Activated CD4-positive, alpha-beta memory T cell treated with anti-CD3 and anti-CD28 coated beads, Interleukin-2, amount 10 ng/mL, durations not matched to agents 7 days and 5 days (primary cell): ENCODE measurements at regions of chr2 and their contacts with region 1.

Region 1: GRCh38 chr2:95389245-95390119 is 13.0 kb upstream of the FAHD2A start:
- DNase-seq: peak; percentile 58
- H3K4me3 Mint-ChIP-seq: no peak overlapping the region
- H3K27ac Mint-ChIP-seq: no peak overlapping the region
- H3K4me1 Mint-ChIP-seq: no peaks in the 10 kb centered on the region
- H3K27me3 Mint-ChIP-seq: no peaks in the 10 kb centered on the region

Region 2: GRCh38 chr2:95361216-95361980 is 28.1 kb before region 1 on chr2:
- CTCF ChIA-PET with region 1: interaction called, 10 read pairs
- POLR2A ChIA-PET with region 1: no interaction called
- DNase-seq: no peak
- H3K4me3 Mint-ChIP-seq: no peak overlapping the region
- H3K27ac Mint-ChIP-seq: no peak overlapping the region
- H3K4me1 Mint-ChIP-seq: no peaks in the 10 kb centered on the region
- H3K27me3 Mint-ChIP-seq: peaks cover 12% of the 10 kb centered on the region

Region 3: GRCh38 chr2:95402370-95403203 is 13.1 kb after region 1 on chr2 and contains the start of gene FAHD2A:
- CTCF ChIA-PET with region 1: interaction called, 29 read pairs
- POLR2A ChIA-PET with region 1: interaction called, 10 read pairs
- DNase-seq: peak; percentile 96
- H3K4me3 Mint-ChIP-seq: peak within 1 kb of the TSS; percentile 99
- H3K27ac Mint-ChIP-seq: peak within 1 kb of the TSS; percentile 89
- H3K4me1 Mint-ChIP-seq: peaks cover 23% of the 10 kb centered on the region
- H3K27me3 Mint-ChIP-seq: no peaks in the 10 kb centered on the region
- total RNA-seq, gene FAHD2A: 35.8 to 37.3 TPM